ENCODE measurements at regions of chr3 and their contacts with region 1.

Region 1: GRCh38 chr3:125374996-125375941 is at the start of gene ZNF148:
- DNase-seq: peak; percentile 83 to 96 (median 90)
- ATAC-seq: peak; percentile 90
- H3K4me3 ChIP-seq: peak within 1 kb of the TSS; percentile 87
- H3K4me3 Mint-ChIP-seq: peak within 1 kb of the TSS; percentile 98
- H3K27ac ChIP-seq: peak within 1 kb of the TSS; percentile 88 to 92
- H3K27ac Mint-ChIP-seq: peak within 1 kb of the TSS; percentile 99
- H3K4me1 ChIP-seq: peaks cover 33% of the 10 kb centered on the region
- H3K4me1 Mint-ChIP-seq: peaks cover 56% of the 10 kb centered on the region
- H3K27me3 ChIP-seq: no peaks in the 10 kb centered on the region
- H3K27me3 Mint-ChIP-seq: no peaks in the 10 kb centered on the region
- CTCF ChIP-seq: no peak
- total RNA-seq, gene ZNF148: 30.9 to 34.0 TPM

Region 2: DNA sequence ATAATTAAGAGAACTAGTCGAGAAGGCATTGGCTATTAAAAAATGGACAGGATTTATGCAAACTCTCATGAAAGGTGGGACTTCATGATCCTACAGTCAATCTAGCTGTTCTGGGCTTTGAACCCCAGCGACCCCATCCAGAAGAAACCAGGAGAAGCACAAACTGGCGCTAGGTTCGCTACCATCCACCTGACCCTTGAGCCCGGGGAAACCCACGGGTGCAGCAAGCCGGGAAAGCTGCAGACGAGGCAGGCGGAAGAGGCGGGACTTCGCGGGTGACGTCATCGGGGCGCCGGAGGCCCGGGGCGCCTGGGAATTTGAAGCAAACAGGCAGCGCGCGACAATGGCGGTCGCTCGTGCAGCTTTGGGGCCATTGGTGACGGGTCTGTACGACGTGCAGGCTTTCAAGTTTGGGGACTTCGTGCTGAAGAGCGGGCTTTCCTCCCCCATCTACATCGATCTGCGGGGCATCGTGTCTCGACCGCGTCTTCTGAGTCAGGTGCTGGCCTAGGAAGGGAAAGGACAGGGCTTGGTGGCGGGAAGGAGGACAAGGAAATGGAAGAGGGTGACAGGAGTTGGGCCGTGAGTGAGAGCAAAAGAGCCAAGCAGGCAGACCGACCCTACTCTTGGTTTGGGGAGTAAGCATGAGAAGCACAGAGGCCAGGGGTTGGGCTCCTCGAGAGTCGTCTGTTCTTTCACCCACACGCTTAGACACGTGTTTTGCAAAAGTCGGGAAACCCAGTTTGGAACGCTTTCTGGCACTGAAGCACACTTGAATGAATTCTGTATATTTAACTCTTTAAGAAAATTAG is 644.9 kb before region 1 on chr3 and contains the start of gene UMPS:
- CTCF ChIA-PET with region 1: no interaction called
- POLR2A ChIA-PET with region 1: no interaction called
- intact Hi-C with region 1: loop called in 1 of 2 experiments (anchors 10 kb)
- DNase-seq: peak; percentile 83 to 95 (median 91)
- ATAC-seq: peak; percentile 97
- H3K4me3 ChIP-seq: peak within 1 kb of the TSS; percentile 78
- H3K4me3 Mint-ChIP-seq: peak within 1 kb of the TSS; percentile 98
- H3K27ac ChIP-seq: peak within 1 kb of the TSS; percentile 54 to 76
- H3K27ac Mint-ChIP-seq: peak within 1 kb of the TSS; percentile 94
- H3K4me1 ChIP-seq: peaks cover 21% of the 10 kb centered on the region
- H3K4me1 Mint-ChIP-seq: peaks cover 44% of the 10 kb centered on the region
- H3K27me3 ChIP-seq: peaks cover 5 to 11% of the 10 kb centered on the region in 2 experiments
- H3K27me3 Mint-ChIP-seq: peaks cover 17% of the 10 kb centered on the region
- CTCF ChIP-seq: no peak
- total RNA-seq, gene UMPS: 19.5 to 19.7 TPM

Region 3: GRCh38 chr3:125150525-125151441 is 224.5 kb before region 1 on chr3:
- CTCF ChIA-PET with region 1: no interaction called
- POLR2A ChIA-PET with region 1: no interaction called
- intact Hi-C with region 1: loop called in 1 of 2 experiments (anchors 10 kb)
- DNase-seq: peak in 12 of 14 experiments; percentile 20 to 73 (median 38)
- ATAC-seq: peak; percentile 81
- H3K4me3 ChIP-seq: no peak overlapping the region
- H3K4me3 Mint-ChIP-seq: no peak overlapping the region
- H3K27ac ChIP-seq: no peak overlapping the region
- H3K27ac Mint-ChIP-seq: no peak overlapping the region
- H3K4me1 ChIP-seq: peaks cover 27% of the 10 kb centered on the region
- H3K4me1 Mint-ChIP-seq: peaks cover 8% of the 10 kb centered on the region
- H3K27me3 ChIP-seq: no peaks in the 10 kb centered on the region
- H3K27me3 Mint-ChIP-seq: no peaks in the 10 kb centered on the region
- CTCF ChIP-seq: peak; percentile 47

Region 4: GRCh38 chr3:125349556-125350165 is 25.6 kb before region 1 on chr3:
- CTCF ChIA-PET with region 1: no interaction called
- POLR2A ChIA-PET with region 1: interaction called, 11 read pairs
- intact Hi-C with region 1: no loop called
- DNase-seq: no peak
- ATAC-seq: no peak
- H3K4me3 ChIP-seq: no peak overlapping the region
- H3K4me3 Mint-ChIP-seq: peak overlapping the region; percentile 8
- H3K27ac ChIP-seq: no peak overlapping the region
- H3K27ac Mint-ChIP-seq: peak overlapping the region; percentile 50
- H3K4me1 ChIP-seq: peaks cover 8% of the 10 kb centered on the region
- H3K4me1 Mint-ChIP-seq: peaks cover 86% of the 10 kb centered on the region
- H3K27me3 ChIP-seq: no peaks in the 10 kb centered on the region
- H3K27me3 Mint-ChIP-seq: no peaks in the 10 kb centered on the region
- CTCF ChIP-seq: no peak

Region 5: GRCh38 chr3:125410922-125411321 is 35.7 kb after region 1 on chr3:
- CTCF ChIA-PET with region 1: no interaction called
- POLR2A ChIA-PET with region 1: no interaction called
- intact Hi-C with region 1: no loop called
- DNase-seq: no peak
- ATAC-seq: no peak
- H3K4me3 ChIP-seq: no peak overlapping the region
- H3K4me3 Mint-ChIP-seq: no peak overlapping the region
- H3K27ac ChIP-seq: no peak overlapping the region
- H3K27ac Mint-ChIP-seq: no peak overlapping the region
- H3K4me1 ChIP-seq: no peaks in the 10 kb centered on the region
- H3K4me1 Mint-ChIP-seq: no peaks in the 10 kb centered on the region
- H3K27me3 ChIP-seq: peaks cover 3 to 5% of the 10 kb centered on the region in 2 experiments
- H3K27me3 Mint-ChIP-seq: peaks cover 24% of the 10 kb centered on the region
- CTCF ChIP-seq: no peak

Region 6: DNA sequence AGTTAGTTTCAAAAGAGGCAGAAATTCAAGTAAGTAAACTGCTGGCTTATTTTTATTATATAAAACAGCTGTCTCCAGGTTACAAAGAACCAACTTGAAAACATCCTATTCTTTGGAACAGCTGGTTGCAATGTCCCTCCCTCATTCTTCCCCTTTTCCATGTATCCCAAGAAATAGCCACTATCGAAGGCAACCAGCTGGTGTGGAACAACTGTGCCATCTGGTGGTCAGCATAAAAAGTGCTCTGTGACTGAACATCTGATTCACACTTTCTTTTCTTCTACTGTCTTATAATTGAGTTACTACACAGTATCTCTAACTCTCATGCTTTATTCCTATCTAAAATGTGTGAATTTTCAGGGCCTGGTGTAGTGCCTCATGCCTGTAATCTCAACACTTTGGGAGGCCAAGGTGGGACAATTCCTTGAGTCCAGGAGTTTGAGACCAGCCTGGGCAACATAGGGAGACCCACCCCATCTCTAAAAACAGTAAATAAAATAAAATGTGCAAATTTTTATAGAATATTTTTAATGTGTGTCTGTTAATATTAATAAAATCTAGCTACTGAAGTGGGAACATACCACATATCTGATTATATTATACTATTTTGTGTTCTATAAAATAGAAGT is 210.4 kb after region 1 on chr3:
- CTCF ChIA-PET with region 1: no interaction called
- POLR2A ChIA-PET with region 1: no interaction called
- intact Hi-C with region 1: loop called in 1 of 2 experiments (anchors 2 kb)
- DNase-seq: peak in 12 of 14 experiments; percentile 5 to 70 (median 28)
- ATAC-seq: peak; percentile 46
- H3K4me3 ChIP-seq: no peak overlapping the region
- H3K4me3 Mint-ChIP-seq: no peak overlapping the region
- H3K27ac ChIP-seq: no peak overlapping the region
- H3K27ac Mint-ChIP-seq: no peak overlapping the region
- H3K4me1 ChIP-seq: peaks cover 4% of the 10 kb centered on the region
- H3K4me1 Mint-ChIP-seq: peaks cover 28% of the 10 kb centered on the region
- H3K27me3 ChIP-seq: no peaks in the 10 kb centered on the region
- H3K27me3 Mint-ChIP-seq: no peaks in the 10 kb centered on the region
- CTCF ChIP-seq: peak; percentile 91

Region 7: DNA sequence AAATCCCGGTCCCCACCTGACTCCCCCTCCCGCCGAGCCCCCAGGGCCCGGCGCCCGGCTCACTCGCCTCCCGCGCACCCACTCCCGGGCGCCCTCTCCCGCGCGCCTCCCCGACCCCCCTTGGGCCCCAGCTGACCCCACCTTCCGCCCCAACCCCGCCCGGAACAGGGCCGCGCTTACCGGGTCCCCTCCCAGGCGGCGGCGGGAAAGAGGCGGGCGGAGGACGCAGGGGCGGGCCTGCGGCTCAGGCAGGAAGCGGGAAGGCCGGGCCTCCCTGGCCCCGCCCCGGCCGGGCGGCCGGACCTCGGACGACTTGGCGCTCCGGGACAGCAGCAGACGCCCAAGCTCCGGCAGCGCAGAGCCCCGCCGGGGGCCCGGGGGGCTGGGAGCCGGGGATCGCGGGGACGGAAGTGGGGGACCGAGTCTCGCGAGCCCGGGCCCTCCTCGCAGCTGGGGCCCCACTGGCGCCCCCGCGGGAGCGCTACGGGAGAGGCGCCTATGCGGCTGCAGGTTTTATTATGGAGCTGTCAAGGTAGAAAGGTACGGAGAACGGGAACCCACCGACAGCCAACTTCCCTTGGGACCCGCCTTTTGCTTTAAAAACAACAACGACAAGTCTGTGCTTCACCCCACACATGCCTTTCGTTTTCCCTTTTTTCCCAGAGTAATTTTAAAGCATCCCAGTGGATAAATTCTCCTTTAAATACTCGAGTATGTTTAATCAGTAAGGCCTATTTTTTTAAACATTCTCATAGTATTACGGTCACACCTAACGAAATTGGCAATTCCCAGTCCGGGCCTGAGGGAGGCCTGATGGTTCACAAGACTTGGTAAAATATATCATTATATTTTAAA is 708.9 kb after region 1 on chr3 and contains the start of gene SLC41A3:
- CTCF ChIA-PET with region 1: no interaction called
- POLR2A ChIA-PET with region 1: no interaction called
- intact Hi-C with region 1: loop called in 1 of 2 experiments (anchors 10 kb)
- DNase-seq: peak; percentile 65 to 88 (median 82)
- ATAC-seq: peak; percentile 86
- H3K4me3 ChIP-seq: peak within 1 kb of the TSS; percentile 70
- H3K4me3 Mint-ChIP-seq: peak within 1 kb of the TSS; percentile 93
- H3K27ac ChIP-seq: peak within 1 kb of the TSS; percentile 33 to 72
- H3K27ac Mint-ChIP-seq: peak within 1 kb of the TSS; percentile 85
- H3K4me1 ChIP-seq: peaks cover 28% of the 10 kb centered on the region
- H3K4me1 Mint-ChIP-seq: peaks cover 30% of the 10 kb centered on the region
- H3K27me3 ChIP-seq: no peaks in the 10 kb centered on the region
- H3K27me3 Mint-ChIP-seq: no peaks in the 10 kb centered on the region
- CTCF ChIP-seq: peak; percentile 82
- total RNA-seq, gene SLC41A3: 26.5 to 29.1 TPM